Ascending aorta (tissue), 2 donors: ENCODE measurements at regions of chr19 and their contacts with region 1.

Region 1: DNA sequence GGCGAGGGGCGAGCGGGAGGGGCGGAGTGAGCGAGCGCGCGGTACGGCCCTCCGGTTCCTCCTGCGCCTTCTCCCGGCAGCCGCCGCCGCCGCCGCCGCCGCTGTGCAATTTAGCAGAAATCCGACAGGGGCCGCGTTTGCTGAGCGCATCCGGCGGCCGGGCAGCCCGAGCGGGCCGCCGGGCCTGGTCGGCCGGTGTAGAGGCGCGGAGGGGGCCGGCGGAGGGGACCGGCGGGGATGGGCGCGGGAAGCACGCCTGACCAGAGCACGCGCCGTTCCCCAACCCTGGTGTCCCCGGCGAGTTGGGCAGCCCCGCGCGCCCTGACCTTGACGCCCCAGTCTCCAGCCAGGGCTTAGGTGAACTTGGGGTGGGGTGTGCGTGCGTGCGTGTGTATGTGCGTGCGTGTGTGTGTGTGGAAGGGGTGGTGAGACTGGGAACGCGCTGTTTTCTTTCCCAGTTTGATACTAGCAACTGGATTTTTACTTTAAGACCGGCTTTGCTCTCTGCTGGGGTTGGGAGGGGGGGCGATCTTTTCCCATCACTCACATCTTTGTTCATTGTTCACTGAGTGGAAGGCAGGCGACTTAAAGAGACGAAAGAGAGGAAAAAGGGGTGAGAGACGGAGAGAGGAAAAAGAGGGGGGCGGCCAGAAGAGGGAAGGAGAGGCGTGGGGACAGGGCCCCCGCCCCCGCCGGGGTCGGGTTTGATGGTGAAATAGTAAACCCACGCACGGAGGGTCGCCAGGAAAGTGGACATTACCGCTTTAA is 144.3 kb upstream of the ZNF536 start:
- DNase-seq: no peak
- H3K4me3 ChIP-seq: peak overlapping the region; percentile 67 to 75
- H3K27ac ChIP-seq: no peak overlapping the region
- H3K4me1 ChIP-seq: peaks cover 11 to 20% of the 10 kb centered on the region in 2 donors
- H3K27me3 ChIP-seq: peaks cover 20% of the 10 kb centered on the region
- CTCF ChIP-seq: peak in 2 of 3 experiments; percentile 8 to 43

Region 2: GRCh38 chr19:30245401-30246039 is 17.7 kb after region 1 on chr19:
- intact Hi-C with region 1: no loop called
- DNase-seq: no peak
- H3K4me3 ChIP-seq: no peak overlapping the region
- H3K27ac ChIP-seq: no peak overlapping the region
- H3K4me1 ChIP-seq: no peaks in the 10 kb centered on the region
- H3K27me3 ChIP-seq: no peaks in the 10 kb centered on the region
- CTCF ChIP-seq: no peak

Region 3: GRCh38 chr19:30288911-30289310 is 61.1 kb after region 1 on chr19:
- intact Hi-C with region 1: no loop called
- DNase-seq: no peak
- H3K4me3 ChIP-seq: no peak overlapping the region
- H3K27ac ChIP-seq: no peak overlapping the region
- H3K4me1 ChIP-seq: no peaks in the 10 kb centered on the region
- H3K27me3 ChIP-seq: no peaks in the 10 kb centered on the region
- CTCF ChIP-seq: no peak

Region 4: DNA sequence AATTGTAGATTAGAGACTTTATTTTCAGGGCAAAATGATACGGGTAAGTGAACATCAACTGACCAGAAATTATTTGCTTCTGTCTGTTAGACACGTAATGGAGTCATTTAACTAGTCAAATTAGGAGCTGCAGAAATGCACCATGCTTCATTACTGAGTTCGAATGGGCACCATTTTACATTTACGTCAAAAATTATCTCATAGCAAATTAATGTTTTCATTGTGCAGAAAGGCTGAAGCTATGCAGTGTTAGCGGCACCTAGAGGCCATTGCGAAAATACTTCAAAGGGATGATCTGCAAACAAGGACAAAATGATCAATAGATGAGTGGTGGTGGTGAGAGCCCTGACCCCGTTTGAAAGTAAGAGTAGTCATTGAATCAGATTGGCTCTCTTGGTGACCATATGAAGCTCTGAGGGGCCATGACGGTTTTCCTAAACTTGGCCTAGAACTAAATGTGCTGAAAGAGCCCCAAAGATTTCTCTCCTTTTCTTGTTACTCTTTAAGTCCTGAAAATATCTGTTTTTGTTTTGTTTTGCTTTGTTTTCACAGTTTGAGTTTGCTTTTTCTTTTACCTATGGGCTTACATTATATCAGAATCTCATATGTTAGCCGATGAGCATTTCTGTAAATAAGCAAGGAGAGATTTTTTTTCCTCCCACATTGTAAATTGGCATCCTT is 422.2 kb after region 1 on chr19:
- intact Hi-C with region 1: loop called (anchors 10 kb)
- DNase-seq: peak in 1 of 2 donors; percentile 61
- H3K4me3 ChIP-seq: no peak overlapping the region
- H3K27ac ChIP-seq: no peak overlapping the region
- H3K4me1 ChIP-seq: no peaks in the 10 kb centered on the region
- H3K27me3 ChIP-seq: no peaks in the 10 kb centered on the region
- CTCF ChIP-seq: peak in 2 of 3 experiments; percentile 49 to 74